ENCODE measurements at regions of chr4 and their contacts with region 1.

Region 1: DNA sequence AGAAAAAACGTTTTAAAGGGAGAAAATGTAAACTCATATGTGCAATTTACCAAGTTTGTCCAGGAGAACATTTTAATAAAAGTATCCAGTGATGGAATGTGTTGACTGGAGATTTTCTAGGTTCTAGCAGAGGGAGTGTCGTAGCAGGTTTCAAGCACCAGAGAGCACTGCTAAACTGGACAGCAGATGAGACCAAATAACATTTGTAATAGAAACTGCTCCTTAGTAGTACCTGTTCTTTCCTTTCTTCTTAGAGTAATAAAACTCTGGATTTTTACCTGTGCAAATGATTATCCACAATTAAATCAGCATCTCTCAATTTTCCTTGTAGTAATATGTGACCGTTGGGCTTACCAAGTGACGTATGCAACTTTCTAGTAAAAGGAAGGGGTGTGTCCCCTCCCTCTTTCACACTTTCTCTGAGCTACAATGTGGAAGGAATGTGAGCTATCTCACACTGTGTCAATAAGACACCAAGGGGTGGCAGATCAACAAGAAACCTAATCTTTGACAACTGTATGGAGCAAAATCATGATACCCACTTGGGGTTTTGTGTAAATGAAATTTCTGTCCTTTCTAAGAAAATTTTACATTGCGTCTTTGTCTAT is 9.5 kb downstream of the HPGDS start:
- DNase-seq: no peak
- ATAC-seq: peak in 3 of 4 donors; percentile 72 to 83 (median 81)
- H3K4me3 ChIP-seq: no peak overlapping the region
- H3K27ac ChIP-seq: no peak overlapping the region
- H3K4me1 ChIP-seq: peaks cover 0 to 16% (median 5%) of the 10 kb centered on the region in 12 donors
- H3K27me3 ChIP-seq: no peaks in the 10 kb centered on the region
- CTCF ChIP-seq: peak in 11 of 12 donors; percentile 22 to 61 (median 46)
- POLR2A ChIP-seq: no peak

Region 2: DNA sequence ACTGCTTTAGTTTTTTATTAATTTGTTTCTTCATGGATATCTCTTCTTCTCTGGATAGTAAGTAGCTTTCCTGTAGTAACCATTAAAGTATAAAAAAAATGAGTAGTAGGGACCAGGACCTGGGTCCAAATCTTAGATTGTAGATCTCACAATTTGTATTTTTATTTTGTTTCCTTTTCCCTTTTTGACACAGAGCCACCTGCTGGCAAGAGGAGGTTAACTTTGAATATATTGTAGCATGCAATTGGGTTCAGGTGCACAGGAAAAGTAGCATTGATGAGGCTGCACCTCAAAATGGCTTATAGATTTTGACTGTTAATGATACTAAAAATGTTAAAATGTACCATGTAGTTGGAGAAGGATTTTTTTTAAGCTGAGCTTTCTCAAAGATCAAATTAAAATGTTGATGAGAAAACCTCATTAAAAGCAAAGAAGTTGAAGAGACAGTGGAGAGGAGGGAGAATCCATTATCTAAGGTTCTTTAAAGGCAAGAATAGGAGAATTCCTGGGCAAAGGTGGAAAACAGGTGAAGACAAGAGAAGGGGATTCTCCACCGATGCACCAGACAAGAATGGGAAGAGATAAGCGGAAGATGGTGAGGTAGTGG is 57.8 kb after region 1 on chr4:
- intact Hi-C with region 1: loop called in 2 of 10 experiments (anchors 5 kb)
- DNase-seq: no peak
- ATAC-seq: no peak
- H3K4me3 ChIP-seq: no peak overlapping the region
- H3K27ac ChIP-seq: no peak overlapping the region
- H3K4me1 ChIP-seq: peaks cover 0 to 8% (median 0%) of the 10 kb centered on the region in 12 donors
- H3K27me3 ChIP-seq: no peaks in the 10 kb centered on the region
- CTCF ChIP-seq: peak in 11 of 12 donors; percentile 19 to 54 (median 46)
- POLR2A ChIP-seq: no peak

Region 3: DNA sequence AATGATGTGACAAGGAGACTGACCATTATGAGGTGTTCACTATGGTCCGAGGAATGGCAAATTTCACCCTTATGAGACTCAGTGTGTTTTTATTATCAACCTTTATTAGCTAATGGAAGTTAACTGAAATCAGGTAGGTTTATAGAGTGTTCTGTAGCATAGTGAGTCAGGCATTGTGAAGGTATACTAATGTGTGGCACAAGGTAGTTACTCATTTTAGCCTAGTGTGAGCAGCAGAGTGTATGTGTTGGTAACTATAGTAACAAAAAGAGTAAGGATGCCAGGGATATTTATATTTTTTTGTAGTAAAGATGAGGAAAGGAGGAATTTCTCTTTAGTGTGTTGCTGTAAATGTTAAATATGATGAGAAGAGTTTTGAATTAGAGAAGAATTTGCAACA is 130.7 kb after region 1 on chr4:
- intact Hi-C with region 1: no loop called
- DNase-seq: no peak
- ATAC-seq: peak in 1 of 4 donors; percentile 18
- H3K4me3 ChIP-seq: peak overlapping the region in 3 of 12 donors; percentile 3 to 18 (median 7)
- H3K27ac ChIP-seq: peak overlapping the region in 8 of 12 donors; percentile 0 to 100 (median 98)
- H3K4me1 ChIP-seq: peaks cover 3 to 99% (median 52%) of the 10 kb centered on the region in 12 donors
- H3K27me3 ChIP-seq: no peaks in the 10 kb centered on the region
- CTCF ChIP-seq: no peak
- POLR2A ChIP-seq: no peak

Region 4: DNA sequence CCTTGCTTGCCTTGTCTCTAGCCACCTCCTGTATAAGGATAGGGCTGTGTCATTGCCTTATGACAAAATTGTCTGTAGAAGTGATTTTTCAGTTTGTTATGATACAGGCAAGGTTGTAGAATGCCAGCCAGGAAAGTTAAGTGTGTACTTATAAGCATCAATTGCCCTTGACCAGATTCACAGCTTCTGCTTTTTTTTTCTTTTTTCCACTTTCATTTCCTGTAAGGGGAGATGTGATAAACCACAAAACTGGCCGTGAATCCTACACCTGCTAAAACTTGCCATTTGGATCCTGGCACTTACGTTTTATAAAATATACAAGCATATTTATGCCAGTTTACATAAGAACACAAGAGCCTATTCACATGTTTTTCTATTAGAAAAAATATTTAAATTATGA is 389.7 kb after region 1 on chr4:
- intact Hi-C with region 1: loop called in 1 of 10 experiments (anchors 10 kb)
- DNase-seq: no peak
- ATAC-seq: no peak
- H3K4me3 ChIP-seq: no peak overlapping the region
- H3K27ac ChIP-seq: no peak overlapping the region
- H3K4me1 ChIP-seq: no peaks in the 10 kb centered on the region
- H3K27me3 ChIP-seq: peaks cover 0 to 2% (median 0%) of the 10 kb centered on the region in 9 donors
- CTCF ChIP-seq: no peak
- POLR2A ChIP-seq: no peak